T-cell (primary cell): ENCODE measurements at regions of chr13 and their contacts with region 1.

Region 1: DNA sequence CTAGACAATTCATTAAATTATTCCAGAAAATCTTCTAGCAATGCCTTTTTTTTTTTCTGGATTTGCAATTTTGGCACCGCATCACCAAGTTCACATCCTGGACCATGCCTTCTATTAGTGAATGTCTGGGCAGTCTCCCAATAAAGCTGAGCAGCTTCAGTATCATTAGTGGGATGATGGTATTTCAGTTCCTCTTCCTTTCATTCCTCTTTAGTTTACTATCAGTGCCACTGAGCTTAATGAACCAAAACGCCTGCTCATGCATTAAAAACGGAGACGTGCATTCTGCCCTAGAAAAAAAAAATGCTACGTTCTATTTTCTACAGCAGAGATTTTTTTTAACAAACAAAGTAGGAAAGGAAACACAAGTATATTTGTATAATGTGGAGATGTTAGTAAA is 343.0 kb downstream of the PCDH9 start:
- DNase-seq: no peak
- ATAC-seq: no peak
- H3K4me3 ChIP-seq: no peak overlapping the region
- H3K4me3 Mint-ChIP-seq: no peak overlapping the region
- H3K27ac ChIP-seq: no peak overlapping the region
- H3K27ac Mint-ChIP-seq: no peak overlapping the region
- H3K4me1 ChIP-seq: no peaks in the 10 kb centered on the region
- H3K4me1 Mint-ChIP-seq: no peaks in the 10 kb centered on the region
- H3K27me3 ChIP-seq: no peaks in the 10 kb centered on the region
- H3K27me3 Mint-ChIP-seq: no peaks in the 10 kb centered on the region

Region 2: GRCh38 chr13:66864627-66865026 is 22.5 kb before region 1 on chr13:
- CTCF ChIA-PET with region 1: no interaction called
- POLR2A ChIA-PET with region 1: interaction called in 1 of 2 experiments, 13 read pairs
- DNase-seq: no peak
- ATAC-seq: no peak
- H3K4me3 ChIP-seq: no peak overlapping the region
- H3K4me3 Mint-ChIP-seq: no peak overlapping the region
- H3K27ac ChIP-seq: no peak overlapping the region
- H3K27ac Mint-ChIP-seq: no peak overlapping the region
- H3K4me1 ChIP-seq: no peaks in the 10 kb centered on the region
- H3K4me1 Mint-ChIP-seq: no peaks in the 10 kb centered on the region
- H3K27me3 ChIP-seq: no peaks in the 10 kb centered on the region
- H3K27me3 Mint-ChIP-seq: no peaks in the 10 kb centered on the region

Region 3: GRCh38 chr13:66933994-66934393 is 46.9 kb after region 1 on chr13:
- CTCF ChIA-PET with region 1: no interaction called
- POLR2A ChIA-PET with region 1: no interaction called
- DNase-seq: no peak
- ATAC-seq: no peak
- H3K4me3 ChIP-seq: no peak overlapping the region
- H3K4me3 Mint-ChIP-seq: no peak overlapping the region
- H3K27ac ChIP-seq: no peak overlapping the region
- H3K27ac Mint-ChIP-seq: no peak overlapping the region
- H3K4me1 ChIP-seq: no peaks in the 10 kb centered on the region
- H3K4me1 Mint-ChIP-seq: no peaks in the 10 kb centered on the region
- H3K27me3 ChIP-seq: no peaks in the 10 kb centered on the region
- H3K27me3 Mint-ChIP-seq: no peaks in the 10 kb centered on the region

Region 4: GRCh38 chr13:68748038-68748437 is 1861.0 kb after region 1 on chr13:
- CTCF ChIA-PET with region 1: no interaction called
- POLR2A ChIA-PET with region 1: no interaction called
- DNase-seq: no peak
- ATAC-seq: no peak
- H3K4me3 ChIP-seq: no peak overlapping the region
- H3K4me3 Mint-ChIP-seq: no peak overlapping the region
- H3K27ac ChIP-seq: no peak overlapping the region
- H3K27ac Mint-ChIP-seq: no peak overlapping the region
- H3K4me1 ChIP-seq: no peaks in the 10 kb centered on the region
- H3K4me1 Mint-ChIP-seq: no peaks in the 10 kb centered on the region
- H3K27me3 ChIP-seq: no peaks in the 10 kb centered on the region
- H3K27me3 Mint-ChIP-seq: no peaks in the 10 kb centered on the region